ENCODE measurements at regions of chr17 and their contacts with region 1.

Region 1: GRCh38 chr17:32877164-32877764 is 340 bp upstream of the MYO1D start:
- DNase-seq: peak; percentile 97
- ATAC-seq: peak; percentile 94
- H3K4me3 Mint-ChIP-seq: peak overlapping the region; percentile 84
- H3K27ac Mint-ChIP-seq: peak overlapping the region; percentile 93
- H3K4me1 Mint-ChIP-seq: peaks cover 13% of the 10 kb centered on the region
- H3K27me3 Mint-ChIP-seq: no peaks in the 10 kb centered on the region
- CTCF ChIP-seq: no peak

Region 2: GRCh38 chr17:32444308-32445073 is 432.8 kb before region 1 on chr17 and contains the start of gene PSMD11:
- CTCF ChIA-PET with region 1: no interaction called
- POLR2A ChIA-PET with region 1: no interaction called
- intact Hi-C with region 1: loop called (anchors 1 kb)
- DNase-seq: peak; percentile 99
- ATAC-seq: peak; percentile 97
- H3K4me3 Mint-ChIP-seq: peak within 1 kb of the TSS; percentile 89
- H3K27ac Mint-ChIP-seq: peak within 1 kb of the TSS; percentile 65
- H3K4me1 Mint-ChIP-seq: peaks cover 28% of the 10 kb centered on the region
- H3K27me3 Mint-ChIP-seq: no peaks in the 10 kb centered on the region
- CTCF ChIP-seq: no peak
- total RNA-seq, gene PSMD11: 115 and 117 TPM in 2 replicates

Region 3: DNA sequence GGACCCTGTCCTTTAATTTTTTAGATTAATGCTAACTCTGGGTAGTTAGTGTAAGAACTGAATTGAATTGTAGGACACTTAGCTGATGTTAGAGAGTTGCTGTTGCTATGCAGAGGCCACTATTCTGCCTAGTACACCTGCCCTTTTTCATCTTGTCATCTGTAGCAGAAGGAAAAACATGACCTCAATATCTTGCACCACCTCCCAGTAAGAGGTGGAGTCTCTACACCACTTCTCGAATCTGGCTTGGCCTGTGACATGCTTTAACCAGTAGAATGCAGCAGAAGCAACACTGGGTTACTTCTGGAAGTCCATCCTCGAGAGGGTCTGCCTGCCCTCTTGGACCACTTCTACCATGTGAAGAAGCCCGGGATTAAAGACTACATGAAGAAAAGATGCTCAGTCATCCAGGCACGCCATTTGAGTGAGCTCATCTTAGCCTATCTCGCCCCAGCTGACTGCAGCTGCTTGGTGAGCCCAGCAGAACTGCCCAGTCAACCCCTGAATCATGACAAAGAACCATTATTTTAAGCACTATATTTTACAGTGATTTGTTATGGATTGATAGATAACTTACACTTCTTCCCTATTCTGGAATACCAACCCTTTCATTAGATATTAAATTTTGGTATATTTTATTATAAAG is 153.8 kb before region 1 on chr17:
- CTCF ChIA-PET with region 1: no interaction called
- POLR2A ChIA-PET with region 1: no interaction called
- intact Hi-C with region 1: no loop called
- DNase-seq: no peak
- ATAC-seq: no peak
- H3K4me3 Mint-ChIP-seq: no peak overlapping the region
- H3K27ac Mint-ChIP-seq: no peak overlapping the region
- H3K4me1 Mint-ChIP-seq: no peaks in the 10 kb centered on the region
- H3K27me3 Mint-ChIP-seq: no peaks in the 10 kb centered on the region
- CTCF ChIP-seq: no peak

Region 4: DNA sequence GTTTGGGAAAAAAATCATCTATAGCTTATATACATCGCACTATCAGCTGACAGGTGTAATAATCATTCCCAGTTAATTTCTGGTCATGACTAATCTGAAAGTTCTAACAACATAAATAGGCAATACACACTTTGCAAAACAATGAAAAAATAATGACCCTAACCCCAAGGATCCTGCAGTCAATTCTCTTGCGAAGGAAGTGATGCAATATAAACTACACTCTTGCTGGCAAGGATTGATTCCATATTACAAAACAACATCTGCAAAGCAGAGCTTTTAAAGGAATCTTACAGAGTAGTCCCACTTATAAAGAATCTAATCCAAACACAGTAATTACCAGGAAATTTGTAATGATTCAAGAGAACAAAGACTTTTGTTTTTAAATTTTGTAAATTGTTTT is 73.7 kb before region 1 on chr17:
- CTCF ChIA-PET with region 1: interaction called, 10 read pairs
- POLR2A ChIA-PET with region 1: no interaction called
- intact Hi-C with region 1: no loop called
- DNase-seq: no peak
- ATAC-seq: no peak
- H3K4me3 Mint-ChIP-seq: no peak overlapping the region
- H3K27ac Mint-ChIP-seq: no peak overlapping the region
- H3K4me1 Mint-ChIP-seq: no peaks in the 10 kb centered on the region
- H3K27me3 Mint-ChIP-seq: no peaks in the 10 kb centered on the region
- CTCF ChIP-seq: no peak

Region 5: DNA sequence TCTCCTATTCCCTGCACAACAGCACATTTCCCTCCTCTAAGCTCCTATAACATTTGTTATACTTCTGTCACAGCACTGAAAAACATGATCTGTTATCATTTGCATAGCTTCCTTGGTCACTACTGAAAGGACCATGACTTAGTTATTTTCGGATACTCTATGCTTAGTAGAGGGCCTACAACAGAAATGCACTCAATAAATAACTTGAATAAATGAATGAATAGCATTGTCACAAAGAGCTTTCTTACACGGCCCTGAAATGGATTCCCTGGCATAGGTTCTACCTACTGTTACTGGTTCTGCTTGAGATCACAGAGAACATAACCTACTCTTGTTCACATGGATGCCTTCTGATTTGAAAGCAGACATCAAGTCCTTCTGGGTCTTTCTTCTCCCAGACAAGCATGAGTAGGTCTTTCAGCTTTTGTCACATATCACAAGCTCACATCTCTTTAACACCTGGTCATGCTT is 41.9 kb before region 1 on chr17:
- CTCF ChIA-PET with region 1: interaction called, 40 read pairs
- POLR2A ChIA-PET with region 1: interaction called, 48 read pairs
- intact Hi-C with region 1: no loop called
- DNase-seq: no peak
- ATAC-seq: peak; percentile 37
- H3K4me3 Mint-ChIP-seq: peak overlapping the region; percentile 17
- H3K27ac Mint-ChIP-seq: peak overlapping the region; percentile 72
- H3K4me1 Mint-ChIP-seq: peaks cover 42% of the 10 kb centered on the region
- H3K27me3 Mint-ChIP-seq: no peaks in the 10 kb centered on the region
- CTCF ChIP-seq: no peak

Region 6: GRCh38 chr17:32909787-32910369 is 32.6 kb after region 1 on chr17:
- CTCF ChIA-PET with region 1: interaction called, 50 read pairs
- POLR2A ChIA-PET with region 1: interaction called, 11 read pairs
- intact Hi-C with region 1: loop called (anchors 1 kb)
- DNase-seq: peak; percentile 22
- ATAC-seq: peak; percentile 91
- H3K4me3 Mint-ChIP-seq: no peak overlapping the region
- H3K27ac Mint-ChIP-seq: no peak overlapping the region
- H3K4me1 Mint-ChIP-seq: no peaks in the 10 kb centered on the region
- H3K27me3 Mint-ChIP-seq: peaks cover 12% of the 10 kb centered on the region
- CTCF ChIP-seq: no peak

Region 7: DNA sequence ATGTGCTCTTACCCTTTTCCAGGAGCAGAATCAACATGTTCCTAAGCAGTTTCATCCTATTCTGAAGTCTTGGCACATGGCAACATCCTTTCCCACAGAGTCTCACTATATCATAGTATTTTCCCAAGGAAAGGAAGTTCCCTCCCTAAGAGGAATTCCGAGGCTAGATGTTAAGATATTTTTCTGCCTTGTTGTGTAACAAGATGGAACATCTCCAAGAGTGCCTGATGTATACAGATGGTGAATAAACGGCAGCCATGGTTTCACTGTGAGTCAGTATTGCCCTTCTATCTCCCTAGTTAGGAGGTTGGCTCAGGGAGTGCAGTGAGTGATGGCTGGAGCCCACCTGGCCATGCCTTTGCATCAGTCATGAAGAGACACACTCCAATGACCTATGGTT is 162.6 kb after region 1 on chr17:
- CTCF ChIA-PET with region 1: no interaction called
- POLR2A ChIA-PET with region 1: no interaction called
- intact Hi-C with region 1: no loop called
- DNase-seq: no peak
- ATAC-seq: no peak
- H3K4me3 Mint-ChIP-seq: no peak overlapping the region
- H3K27ac Mint-ChIP-seq: no peak overlapping the region
- H3K4me1 Mint-ChIP-seq: no peaks in the 10 kb centered on the region
- H3K27me3 Mint-ChIP-seq: peaks cover 36% of the 10 kb centered on the region
- CTCF ChIP-seq: no peak